Psoas muscle (tissue), 8 donors: ENCODE measurements at regions of chr12 and their contacts with region 1.

Region 1: GRCh38 chr12:93569656-93570551 is 2.6 kb upstream of the SOCS2 start:
- DNase-seq: peak; percentile 90
- ATAC-seq: peak; percentile 81 to 89 (median 83)
- H3K4me3 ChIP-seq: peak overlapping the region; percentile 94
- H3K27ac ChIP-seq: peak overlapping the region; percentile 89
- H3K4me1 ChIP-seq: no peaks in the 10 kb centered on the region
- H3K27me3 ChIP-seq: no peaks in the 10 kb centered on the region
- CTCF ChIP-seq: peak; percentile 79

Region 2: GRCh38 chr12:93380480-93381121 is 189.3 kb before region 1 on chr12:
- intact Hi-C with region 1: no loop called
- DNase-seq: no peak
- ATAC-seq: no peak
- H3K4me3 ChIP-seq: peak overlapping the region; percentile 78
- H3K27ac ChIP-seq: peak overlapping the region; percentile 92
- H3K4me1 ChIP-seq: peaks cover 61% of the 10 kb centered on the region
- H3K27me3 ChIP-seq: no peaks in the 10 kb centered on the region
- CTCF ChIP-seq: peak; percentile 24

Region 3: GRCh38 chr12:93502802-93503623 is 66.9 kb before region 1 on chr12:
- intact Hi-C with region 1: loop called in 1 of 2 experiments (anchors 5 kb)
- DNase-seq: no peak
- ATAC-seq: peak in 1 of 4 donors; percentile 58
- H3K4me3 ChIP-seq: no peak overlapping the region
- H3K27ac ChIP-seq: no peak overlapping the region
- H3K4me1 ChIP-seq: no peaks in the 10 kb centered on the region
- H3K27me3 ChIP-seq: no peaks in the 10 kb centered on the region
- CTCF ChIP-seq: peak; percentile 86

Region 4: GRCh38 chr12:93624595-93625294 is 54.8 kb after region 1 on chr12:
- intact Hi-C with region 1: no loop called
- DNase-seq: no peak
- ATAC-seq: peak; percentile 84 to 94 (median 92)
- H3K4me3 ChIP-seq: no peak overlapping the region
- H3K27ac ChIP-seq: peak overlapping the region; percentile 62
- H3K4me1 ChIP-seq: peaks cover 13% of the 10 kb centered on the region
- H3K27me3 ChIP-seq: no peaks in the 10 kb centered on the region
- CTCF ChIP-seq: no peak

Region 5: GRCh38 chr12:93677195-93678064 is 107.5 kb after region 1 on chr12 and contains the start of gene CRADD:
- intact Hi-C with region 1: loop called in 1 of 2 experiments (anchors 1 kb)
- DNase-seq: peak; percentile 67 to 83
- ATAC-seq: peak; percentile 81 to 91 (median 86)
- H3K4me3 ChIP-seq: peak within 1 kb of the TSS; percentile 69
- H3K27ac ChIP-seq: peak within 1 kb of the TSS; percentile 99
- H3K4me1 ChIP-seq: peaks cover 44% of the 10 kb centered on the region
- H3K27me3 ChIP-seq: no peaks in the 10 kb centered on the region
- CTCF ChIP-seq: peak; percentile 4
- total RNA-seq, gene CRADD: 12.7 to 21.1 (median 14.7) TPM

Region 6: DNA sequence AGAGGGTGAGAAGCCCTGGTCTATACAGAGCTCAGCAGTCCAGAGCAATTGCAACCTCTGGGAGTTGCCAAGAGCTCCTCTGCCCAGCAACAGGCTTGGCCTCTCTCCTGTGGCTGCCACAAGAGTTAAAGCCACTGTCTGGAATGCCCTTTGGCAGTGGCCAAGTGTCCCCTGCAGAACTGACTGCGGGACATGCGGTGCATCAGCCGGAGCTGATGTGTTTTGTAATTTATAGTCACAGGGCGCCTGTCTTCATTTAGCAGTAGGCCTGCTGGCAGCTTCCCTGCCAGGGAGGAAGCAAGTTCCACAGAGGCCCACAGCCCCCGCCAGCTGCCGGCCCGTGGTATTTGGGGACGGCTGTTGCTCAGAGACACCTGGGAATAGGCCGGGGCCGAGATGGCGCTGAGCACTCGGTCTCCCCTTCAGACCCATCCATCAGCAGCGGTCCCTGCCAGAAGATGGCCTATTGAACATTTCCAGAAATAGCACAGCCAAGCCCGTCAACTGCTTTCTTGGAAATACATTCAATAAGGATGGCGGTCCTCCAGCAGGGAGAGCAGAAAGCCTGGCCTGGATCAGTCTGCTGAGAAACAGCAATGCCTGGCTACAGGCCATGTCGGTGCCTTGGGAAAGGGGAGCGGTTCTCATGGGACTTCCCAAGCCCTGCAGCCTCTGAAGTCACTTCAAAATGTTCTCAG is 324.6 kb after region 1 on chr12:
- intact Hi-C with region 1: loop called (anchors 2 to 10 kb)
- DNase-seq: peak; percentile 93 to 94
- ATAC-seq: peak; percentile 90 to 95 (median 94)
- H3K4me3 ChIP-seq: peak overlapping the region; percentile 44
- H3K27ac ChIP-seq: peak overlapping the region; percentile 84
- H3K4me1 ChIP-seq: peaks cover 35% of the 10 kb centered on the region
- H3K27me3 ChIP-seq: no peaks in the 10 kb centered on the region
- CTCF ChIP-seq: no peak

Region 7: GRCh38 chr12:94074980-94075928 is 505.4 kb after region 1 on chr12:
- intact Hi-C with region 1: loop called in 1 of 2 experiments (anchors 10 kb)
- DNase-seq: peak; percentile 65 to 77
- ATAC-seq: peak; percentile 72 to 90 (median 80)
- H3K4me3 ChIP-seq: peak overlapping the region; percentile 27
- H3K27ac ChIP-seq: peak overlapping the region; percentile 67
- H3K4me1 ChIP-seq: peaks cover 21% of the 10 kb centered on the region
- H3K27me3 ChIP-seq: no peaks in the 10 kb centered on the region
- CTCF ChIP-seq: peak; percentile 60